ENCODE measurements at regions of chr18 and their contacts with region 1.

Region 1: GRCh38 chr18:35060122-35060815 is 19.1 kb downstream of the MAPRE2 start:
- DNase-seq: no peak
- ATAC-seq: 0 out of 3 replicates have a peak, but pooled peaks have one; percentile 6
- H3K4me3 ChIP-seq: no peak overlapping the region
- H3K27ac ChIP-seq: no peak overlapping the region
- H3K4me1 ChIP-seq: peaks cover 0 to 14% of the 10 kb centered on the region in 2 experiments; a peak in 4 of 5 replicates
- H3K27me3 ChIP-seq: no peaks in the 10 kb centered on the region
- CTCF ChIP-seq: no peak
- EP300 ChIP-seq: no peak
- POLR2A ChIP-seq: no peak
- RAD21 ChIP-seq: no peak

Region 2: GRCh38 chr18:35050028-35050546 is 10.2 kb before region 1 on chr18:
- CTCF ChIA-PET with region 1: no interaction called
- POLR2A ChIA-PET with region 1: interaction called, 33 read pairs
- in situ Hi-C with region 1: no loop called
- intact Hi-C with region 1: no loop called
- DNase-seq: no peak
- ATAC-seq: peak; percentile 17
- H3K4me3 ChIP-seq: no peak overlapping the region
- H3K27ac ChIP-seq: peak overlapping the region; percentile 5; the same call in 1 of the 3 replicates
- H3K4me1 ChIP-seq: peaks cover 15 to 55% of the 10 kb centered on the region in 2 experiments
- H3K27me3 ChIP-seq: no peaks in the 10 kb centered on the region
- CTCF ChIP-seq: no peak
- EP300 ChIP-seq: no peak
- POLR2A ChIP-seq: no peak
- RAD21 ChIP-seq: no peak

Region 3: DNA sequence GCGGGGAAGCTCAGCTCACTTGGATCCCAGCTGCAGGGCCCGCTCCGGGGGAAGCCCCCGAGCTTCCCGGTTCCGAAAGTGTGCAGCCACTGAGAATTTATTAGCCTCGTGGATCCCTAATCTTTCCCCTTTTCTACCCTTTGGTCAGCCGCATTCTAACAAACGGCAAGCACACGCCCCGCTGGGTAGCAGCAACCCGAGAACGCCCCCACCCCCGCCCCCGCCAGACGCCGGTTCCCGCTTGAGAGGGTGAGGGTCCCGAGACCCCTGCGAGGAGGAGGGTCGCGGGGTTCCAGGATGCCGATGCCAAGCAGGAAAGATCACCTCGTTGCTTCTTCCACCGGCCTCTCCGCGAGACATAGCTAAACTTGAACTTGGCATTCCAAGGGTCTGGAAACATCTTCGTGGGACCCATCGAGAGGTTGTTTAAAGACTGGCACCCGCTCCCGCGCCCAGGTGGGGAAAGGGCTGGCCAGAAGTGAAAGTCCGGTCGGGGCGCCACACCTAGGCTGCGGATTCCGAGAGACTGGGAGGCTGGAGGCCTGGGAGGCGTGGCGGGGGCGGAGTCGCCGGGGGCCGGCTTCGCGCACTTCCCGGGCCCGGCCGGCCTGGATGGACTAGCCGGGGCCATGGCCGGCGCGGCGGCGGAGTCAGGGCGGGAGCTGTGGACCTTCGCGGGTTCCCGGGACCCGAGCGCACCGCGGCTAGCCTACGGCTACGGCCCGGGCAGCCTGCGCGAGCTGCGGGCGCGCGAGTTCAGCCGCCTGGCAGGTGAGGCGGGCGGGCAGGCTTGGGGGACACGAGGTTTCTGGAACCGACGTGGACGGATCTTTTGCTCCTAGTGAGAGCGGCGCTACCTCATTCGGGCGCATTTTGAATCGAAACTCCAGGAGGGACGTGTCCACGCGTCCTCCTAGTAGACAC is 1126.9 kb after region 1 on chr18 and contains the start of gene MOCOS:
- CTCF ChIA-PET with region 1: no interaction called
- POLR2A ChIA-PET with region 1: no interaction called
- in situ Hi-C with region 1: no loop called
- intact Hi-C with region 1: no loop called
- DNase-seq: peak; percentile 91 to 97 (median 95)
- ATAC-seq: peak; percentile 95
- H3K4me3 ChIP-seq: peak within 1 kb of the TSS; percentile 68
- H3K27ac ChIP-seq: peak within 1 kb of the TSS; percentile 61
- H3K4me1 ChIP-seq: peaks cover 12 to 31% of the 10 kb centered on the region in 2 experiments; a peak in 4 of 5 replicates
- H3K27me3 ChIP-seq: no peaks in the 10 kb centered on the region
- CTCF ChIP-seq: peak in 1 of 3 experiments; percentile 4; a peak in 1 of 6 replicates
- EP300 ChIP-seq: no peak
- POLR2A ChIP-seq: peak; percentile 84
- RAD21 ChIP-seq: no peak
- polyA plus RNA-seq, gene MOCOS: 4.5 to 4.6 TPM